Ascending aorta (tissue), 2 donors: ENCODE measurements at regions of chr9 and their contacts with region 1.

Region 1: GRCh38 chr9:121299467-121300234 is 31.7 kb downstream of the GSN start:
- DNase-seq: peak in 1 of 2 donors; percentile 88
- H3K4me3 ChIP-seq: peak overlapping the region; percentile 70 to 74
- H3K27ac ChIP-seq: peak overlapping the region; percentile 92 to 99
- H3K4me1 ChIP-seq: peaks cover 51 to 82% of the 10 kb centered on the region in 2 donors
- H3K27me3 ChIP-seq: no peaks in the 10 kb centered on the region
- CTCF ChIP-seq: no peak

Region 2: GRCh38 chr9:121278535-121279261 is 21.0 kb before region 1 on chr9:
- intact Hi-C with region 1: loop called (anchors 2 kb)
- DNase-seq: peak in 1 of 2 donors; percentile 92
- H3K4me3 ChIP-seq: peak overlapping the region in 1 of 2 donors; percentile 21
- H3K27ac ChIP-seq: peak overlapping the region; percentile 98 to 99
- H3K4me1 ChIP-seq: peaks cover 74 to 96% of the 10 kb centered on the region in 2 donors
- H3K27me3 ChIP-seq: no peaks in the 10 kb centered on the region
- CTCF ChIP-seq: peak; percentile 74 to 89 (median 84)

Region 3: DNA sequence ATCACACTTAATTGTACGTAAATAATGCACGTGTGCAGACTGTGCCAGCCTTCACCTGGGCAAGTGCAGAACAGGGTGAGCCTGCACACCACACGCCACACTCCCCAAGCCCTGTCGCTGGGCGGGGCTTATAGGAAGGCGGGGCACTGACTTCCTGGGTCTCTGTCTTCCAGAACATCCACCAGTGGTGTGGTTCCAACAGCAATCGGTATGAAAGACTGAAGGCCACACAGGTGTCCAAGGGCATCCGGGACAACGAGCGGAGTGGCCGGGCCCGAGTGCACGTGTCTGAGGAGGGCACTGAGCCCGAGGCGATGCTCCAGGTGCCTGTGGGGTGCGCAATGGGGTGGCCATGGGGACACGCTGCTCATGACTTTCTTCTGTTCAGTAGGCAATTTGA is 12.5 kb after region 1 on chr9:
- intact Hi-C with region 1: loop called (anchors 2 kb)
- DNase-seq: no peak
- H3K4me3 ChIP-seq: no peak overlapping the region
- H3K27ac ChIP-seq: no peak overlapping the region
- H3K4me1 ChIP-seq: peaks cover 0 to 3% of the 10 kb centered on the region in 2 donors
- H3K27me3 ChIP-seq: no peaks in the 10 kb centered on the region
- CTCF ChIP-seq: no peak

Region 4: DNA sequence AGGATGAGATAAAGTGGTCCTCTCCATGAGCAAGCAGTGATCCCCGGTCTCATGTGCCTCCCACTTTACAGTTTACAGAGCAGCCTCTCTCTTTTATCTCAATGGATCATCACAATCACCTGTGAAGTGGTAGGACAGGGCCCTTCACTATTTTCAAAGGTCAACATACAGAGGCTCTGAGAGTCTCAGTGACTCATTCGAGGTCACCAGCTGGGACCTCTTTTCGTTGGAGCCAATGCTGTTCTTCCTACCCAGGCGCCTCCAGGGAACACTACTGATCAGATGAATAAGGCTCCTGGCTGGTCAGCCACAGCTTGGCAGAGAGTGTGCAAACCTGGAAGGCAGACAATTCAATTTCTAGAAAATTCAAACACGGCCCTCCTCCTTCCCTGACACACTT is 183.4 kb after region 1 on chr9:
- intact Hi-C with region 1: loop called (anchors 10 kb)
- DNase-seq: no peak
- H3K4me3 ChIP-seq: no peak overlapping the region
- H3K27ac ChIP-seq: peak overlapping the region; percentile 81 to 95
- H3K4me1 ChIP-seq: peaks cover 35 to 78% of the 10 kb centered on the region in 2 donors
- H3K27me3 ChIP-seq: no peaks in the 10 kb centered on the region
- CTCF ChIP-seq: no peak